Panc1 (cell line): ENCODE measurements at regions of chr22 and their contacts with region 1.

Region 1: GRCh38 chr22:37862570-37863325 is 13.5 kb downstream of the EIF3L start:
- DNase-seq: no peak
- ATAC-seq: no peak
- H3K4me3 ChIP-seq: no peak overlapping the region
- H3K27ac ChIP-seq: no peak overlapping the region
- H3K4me1 ChIP-seq: no peaks in the 10 kb centered on the region
- H3K27me3 ChIP-seq: no peaks in the 10 kb centered on the region
- CTCF ChIP-seq: no peak

Region 2: DNA sequence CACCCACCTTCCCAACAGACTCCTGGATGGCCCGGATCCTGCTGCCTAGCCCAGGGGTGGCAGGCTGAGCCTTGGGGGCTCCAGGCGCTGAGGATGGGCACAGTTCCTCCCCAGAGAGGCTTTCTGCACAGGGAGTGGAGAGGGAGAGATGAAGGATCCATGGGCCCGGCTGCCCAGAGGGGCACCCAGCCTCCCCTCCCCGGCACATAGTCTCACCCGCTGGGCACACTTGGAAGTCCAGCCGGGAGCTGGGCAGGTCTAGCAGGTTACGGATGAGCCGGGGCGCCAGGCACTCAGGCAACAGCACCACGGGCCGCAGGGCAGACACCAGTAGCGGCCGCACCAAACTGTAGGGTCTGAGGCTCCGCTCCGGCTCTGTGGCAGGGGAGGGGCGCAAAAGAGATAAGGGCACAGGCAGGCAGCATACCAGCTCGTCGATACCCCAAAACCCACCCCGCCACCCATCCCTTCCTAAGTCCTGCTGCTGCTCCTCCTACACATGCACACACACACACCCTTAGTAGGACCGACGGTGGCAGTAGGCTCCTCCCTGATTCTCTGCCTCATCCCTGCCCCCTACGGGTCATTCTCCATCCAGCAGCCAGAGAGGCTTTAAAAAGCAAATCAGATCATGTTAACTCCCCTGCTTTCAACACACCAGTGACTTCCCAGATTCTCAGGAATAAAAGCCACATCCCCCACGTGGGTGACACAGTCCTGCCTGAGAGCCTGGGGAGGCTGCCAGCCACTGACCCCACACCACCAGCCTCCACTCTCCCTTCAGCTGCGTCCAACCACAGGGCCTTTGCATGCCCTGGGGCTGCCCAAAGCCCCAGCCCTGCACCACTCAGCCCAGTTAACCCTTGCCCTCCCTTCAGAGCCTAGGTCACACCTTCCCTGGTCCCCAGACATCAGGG is 370.1 kb before region 1 on chr22:
- CTCF ChIA-PET with region 1: no interaction called
- POLR2A ChIA-PET with region 1: no interaction called
- in situ Hi-C with region 1: no loop called
- intact Hi-C with region 1: no loop called
- DNase-seq: no peak
- ATAC-seq: peak; percentile 69
- H3K4me3 ChIP-seq: no peak overlapping the region
- H3K27ac ChIP-seq: peak overlapping the region; percentile 34; the same call in 1 of the 2 replicates
- H3K4me1 ChIP-seq: peaks cover 24% of the 10 kb centered on the region
- H3K27me3 ChIP-seq: no peaks in the 10 kb centered on the region
- CTCF ChIP-seq: no peak; the same call in none of the 2 replicates

Region 3: DNA sequence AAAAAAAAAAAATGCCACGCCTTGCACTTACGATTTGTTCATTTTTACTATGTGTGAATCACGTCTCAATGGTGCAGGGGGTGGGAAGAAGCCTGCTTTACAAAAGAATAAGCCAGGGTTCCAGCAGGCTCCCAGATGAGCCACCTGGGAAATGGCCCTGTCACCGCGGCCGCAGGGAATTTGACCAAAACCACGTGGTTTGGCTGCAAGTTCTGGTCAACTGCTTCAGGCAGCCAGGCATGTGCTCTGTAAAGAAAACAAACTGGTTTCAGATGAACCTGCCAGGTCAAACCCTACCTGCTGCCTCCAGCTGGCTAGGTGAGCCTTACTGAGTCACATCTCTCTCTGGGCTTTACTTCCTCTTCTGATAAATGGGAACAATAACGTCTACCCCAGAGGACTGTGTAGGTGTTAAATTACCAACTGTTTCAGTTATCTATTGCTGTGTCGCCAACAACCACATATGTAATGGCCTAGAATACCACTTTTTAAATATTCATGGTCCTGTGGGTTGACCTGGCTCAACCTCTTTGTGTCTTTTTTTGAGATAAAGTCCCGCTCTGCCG is 85.5 kb before region 1 on chr22:
- CTCF ChIA-PET with region 1: no interaction called
- POLR2A ChIA-PET with region 1: no interaction called
- in situ Hi-C with region 1: no loop called
- intact Hi-C with region 1: no loop called
- DNase-seq: no peak
- ATAC-seq: no peak
- H3K4me3 ChIP-seq: no peak overlapping the region
- H3K27ac ChIP-seq: no peak overlapping the region
- H3K4me1 ChIP-seq: peaks cover 10% of the 10 kb centered on the region
- H3K27me3 ChIP-seq: no peaks in the 10 kb centered on the region
- CTCF ChIP-seq: no peak

Region 4: DNA sequence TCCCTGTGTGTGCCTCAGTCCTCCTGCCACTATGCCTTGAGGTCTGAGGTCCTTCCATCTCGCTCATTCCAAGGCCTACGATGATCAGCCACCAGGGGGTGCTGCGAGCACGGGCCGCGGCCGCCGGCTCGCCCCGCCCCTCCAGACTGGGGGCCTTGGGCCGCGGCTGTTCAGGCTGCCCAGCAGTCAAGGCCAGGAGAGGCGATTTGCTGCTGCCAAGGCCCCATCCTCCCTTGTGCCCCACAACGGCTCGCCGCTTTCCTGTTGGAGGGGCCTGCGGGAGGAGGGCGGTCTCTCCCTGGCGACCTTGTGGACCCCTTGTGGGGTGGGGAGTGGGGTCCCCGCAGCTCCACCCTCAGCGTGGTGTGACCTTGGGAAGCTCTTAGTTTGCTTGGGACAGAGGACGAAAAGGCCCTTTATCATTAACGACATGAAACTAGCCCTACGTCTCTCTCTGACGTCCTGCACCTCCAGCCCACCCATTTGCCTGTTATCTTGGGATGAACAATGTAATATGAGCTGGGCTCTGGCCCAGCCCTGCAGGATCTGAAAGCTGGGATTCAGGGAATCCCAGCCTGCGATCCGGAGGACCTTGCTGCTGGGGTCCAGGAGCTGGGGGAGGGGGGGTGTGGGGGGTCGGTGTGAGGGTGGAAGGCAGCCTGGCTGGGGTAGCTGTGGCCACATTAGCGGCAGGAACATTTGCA is 44.9 kb before region 1 on chr22:
- CTCF ChIA-PET with region 1: interaction called, 12 read pairs
- POLR2A ChIA-PET with region 1: interaction called, 9 read pairs
- in situ Hi-C with region 1: no loop called
- intact Hi-C with region 1: loop called (anchors 5 kb)
- DNase-seq: no peak
- ATAC-seq: peak; percentile 96
- H3K4me3 ChIP-seq: peak overlapping the region; percentile 24 to 33; a peak in 3 of 4 replicates
- H3K27ac ChIP-seq: peak overlapping the region; percentile 23; the same call in 1 of the 2 replicates
- H3K4me1 ChIP-seq: no peaks in the 10 kb centered on the region
- H3K27me3 ChIP-seq: no peaks in the 10 kb centered on the region
- CTCF ChIP-seq: peak; percentile 94